Breast epithelium (tissue), 4 donors: ENCODE measurements at regions of chrX and their contacts with region 1.

Region 1: GRCh38 chrX:154515878-154516655 is at the start of gene FAM3A:
- DNase-seq: peak; percentile 92 to 94
- H3K4me3 ChIP-seq: peak within 1 kb of the TSS; percentile 66 to 88 (median 66)
- H3K27ac ChIP-seq: peak within 1 kb of the TSS; percentile 82 to 90
- H3K4me1 ChIP-seq: no peaks in the 10 kb centered on the region
- H3K27me3 ChIP-seq: peaks cover 0 to 20% of the 10 kb centered on the region in 2 donors
- CTCF ChIP-seq: no peak
- POLR2A ChIP-seq: peak; percentile 71
- total RNA-seq, gene FAM3A: 38.8 to 42.6 (median 41.3) TPM

Region 2: DNA sequence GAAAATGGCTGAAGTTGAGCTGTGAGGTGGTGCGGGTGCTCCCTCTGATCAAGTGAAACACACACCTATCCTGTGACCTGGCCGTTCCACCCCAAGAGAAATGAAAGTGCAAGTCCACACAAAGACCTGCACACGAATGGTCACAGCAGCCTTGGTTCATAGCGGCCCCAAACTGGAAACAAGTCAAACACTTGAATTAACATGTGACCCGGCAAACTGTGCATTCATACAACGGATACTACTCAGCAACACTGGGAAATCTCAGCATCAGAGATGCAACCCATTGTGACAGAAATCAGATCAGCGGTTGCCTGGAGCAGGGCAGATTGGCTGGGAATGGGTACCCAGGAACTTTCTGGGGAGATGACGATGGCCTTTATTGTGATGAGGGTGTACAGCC is 23.0 kb after region 1 on chrX:
- intact Hi-C with region 1: loop called (anchors 2 kb)
- DNase-seq: no peak
- H3K4me3 ChIP-seq: no peak overlapping the region
- H3K27ac ChIP-seq: no peak overlapping the region
- H3K4me1 ChIP-seq: no peaks in the 10 kb centered on the region
- H3K27me3 ChIP-seq: peaks cover 0 to 51% of the 10 kb centered on the region in 2 donors
- CTCF ChIP-seq: no peak
- POLR2A ChIP-seq: no peak

Region 3: DNA sequence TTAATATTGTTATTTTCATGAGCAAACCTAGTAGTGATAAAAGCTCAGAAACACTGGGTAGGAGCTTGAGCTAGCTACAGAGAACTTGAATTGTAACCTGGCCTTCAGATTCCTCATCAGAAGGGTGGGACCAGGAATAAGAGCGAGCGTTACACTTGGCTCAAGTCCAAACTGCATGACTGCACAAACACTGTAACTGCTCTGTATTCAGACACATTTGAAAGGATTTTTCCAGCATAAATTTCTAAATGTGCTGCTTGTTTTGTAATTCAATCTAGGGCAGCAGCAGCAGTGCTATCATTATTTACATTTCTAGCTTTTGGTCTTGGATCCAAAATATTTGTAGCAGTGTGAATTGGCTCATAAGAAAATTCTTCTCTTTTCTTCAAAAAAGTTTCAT is 1229.7 kb after region 1 on chrX:
- intact Hi-C with region 1: no loop called
- DNase-seq: no peak
- H3K4me3 ChIP-seq: no peak overlapping the region
- H3K27ac ChIP-seq: no peak overlapping the region
- H3K4me1 ChIP-seq: no peaks in the 10 kb centered on the region
- H3K27me3 ChIP-seq: peaks cover 0 to 3% of the 10 kb centered on the region in 2 donors
- CTCF ChIP-seq: no peak
- POLR2A ChIP-seq: no peak